Activated CD8-positive, alpha-beta T cell treated with anti-CD3 and anti-CD28 coated beads, Interleukin-2, amount 10 ng/mL, durations not matched to agents 7 days and 5 days (primary cell): ENCODE measurements at regions of chr1 and their contacts with region 1.

Region 1: DNA sequence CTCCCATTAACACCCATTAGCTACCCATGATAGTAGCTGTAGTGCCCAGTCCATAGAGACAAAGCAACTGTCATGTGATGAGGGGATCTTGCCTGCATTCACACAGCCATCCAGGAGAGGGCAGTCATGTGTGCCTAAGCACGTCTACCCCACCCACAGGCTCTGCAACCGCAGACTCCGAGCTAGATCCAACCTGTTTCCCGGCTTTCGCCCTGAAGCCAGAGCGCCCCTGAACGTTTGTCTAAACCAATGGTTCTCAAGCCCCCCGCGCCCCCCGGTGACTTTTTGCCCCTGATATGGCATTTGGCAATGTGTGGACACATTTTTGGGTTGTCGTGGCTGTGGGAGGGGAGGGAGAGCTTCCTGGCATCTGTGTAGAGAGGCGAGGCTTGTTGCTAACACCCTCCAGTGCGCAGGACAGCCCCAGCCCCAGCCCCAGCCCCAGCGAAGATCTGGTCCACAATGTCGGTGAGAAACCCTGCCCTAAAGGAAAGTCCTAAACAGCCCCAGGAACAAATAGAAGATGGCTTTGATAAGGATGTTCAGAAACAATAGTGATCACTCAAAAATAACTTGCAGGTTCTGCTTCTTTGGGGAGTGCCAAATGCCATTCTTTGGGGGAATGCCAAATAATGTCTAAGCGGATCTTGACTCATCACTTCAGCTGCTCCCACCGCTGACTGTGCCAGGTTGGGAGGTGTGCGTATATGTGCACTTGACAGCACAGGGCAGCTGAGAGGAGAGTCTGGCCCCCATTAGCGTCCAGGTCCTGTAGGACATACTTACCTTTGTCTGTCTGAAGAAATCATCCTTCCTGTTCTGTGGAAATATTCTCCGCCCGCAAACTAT is 34.5 kb downstream of the SLC44A3 start:
- DNase-seq: peak; percentile 87
- ATAC-seq: peak; percentile 97
- H3K4me3 Mint-ChIP-seq: no peak overlapping the region
- H3K27ac Mint-ChIP-seq: no peak overlapping the region
- H3K4me1 Mint-ChIP-seq: no peaks in the 10 kb centered on the region
- H3K27me3 Mint-ChIP-seq: peaks cover 7% of the 10 kb centered on the region

Region 2: GRCh38 chr1:94773931-94774422 is 80.7 kb before region 1 on chr1:
- CTCF ChIA-PET with region 1: no interaction called
- POLR2A ChIA-PET with region 1: no interaction called
- DNase-seq: no peak
- ATAC-seq: no peak
- H3K4me3 Mint-ChIP-seq: no peak overlapping the region
- H3K27ac Mint-ChIP-seq: no peak overlapping the region
- H3K4me1 Mint-ChIP-seq: no peaks in the 10 kb centered on the region
- H3K27me3 Mint-ChIP-seq: peaks cover 2% of the 10 kb centered on the region

Region 3: GRCh38 chr1:94787691-94788090 is 67.0 kb before region 1 on chr1:
- CTCF ChIA-PET with region 1: no interaction called
- POLR2A ChIA-PET with region 1: no interaction called
- DNase-seq: no peak
- ATAC-seq: no peak
- H3K4me3 Mint-ChIP-seq: no peak overlapping the region
- H3K27ac Mint-ChIP-seq: no peak overlapping the region
- H3K4me1 Mint-ChIP-seq: peaks cover 2% of the 10 kb centered on the region
- H3K27me3 Mint-ChIP-seq: peaks cover 14% of the 10 kb centered on the region

Region 4: GRCh38 chr1:94836891-94837290 is 17.8 kb before region 1 on chr1:
- CTCF ChIA-PET with region 1: interaction called, 14 read pairs
- POLR2A ChIA-PET with region 1: no interaction called
- DNase-seq: no peak
- ATAC-seq: no peak
- H3K4me3 Mint-ChIP-seq: no peak overlapping the region
- H3K27ac Mint-ChIP-seq: no peak overlapping the region
- H3K4me1 Mint-ChIP-seq: no peaks in the 10 kb centered on the region
- H3K27me3 Mint-ChIP-seq: peaks cover 19% of the 10 kb centered on the region

Region 5: DNA sequence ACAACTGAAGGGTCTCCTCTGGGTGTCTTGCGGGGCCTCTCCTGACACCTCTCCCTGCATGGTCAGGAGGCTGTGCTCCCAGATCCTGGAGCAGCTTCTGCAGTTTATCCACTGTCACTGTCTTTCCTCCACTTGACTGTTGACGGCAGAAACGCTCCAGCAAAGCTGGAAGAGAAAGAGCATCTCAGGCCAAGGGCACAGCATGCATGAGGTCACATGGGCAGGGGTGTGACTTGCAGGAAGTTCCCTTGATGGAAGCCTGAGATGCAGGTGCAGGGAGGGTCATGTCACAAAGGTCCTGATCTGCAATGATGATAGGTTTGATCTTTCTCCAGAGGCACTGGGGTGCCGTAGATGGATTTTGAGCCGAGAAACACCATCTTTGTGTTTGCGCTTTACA is 11.3 kb before region 1 on chr1:
- CTCF ChIA-PET with region 1: interaction called, 19 read pairs
- POLR2A ChIA-PET with region 1: no interaction called
- DNase-seq: no peak
- ATAC-seq: no peak
- H3K4me3 Mint-ChIP-seq: no peak overlapping the region
- H3K27ac Mint-ChIP-seq: no peak overlapping the region
- H3K4me1 Mint-ChIP-seq: no peaks in the 10 kb centered on the region
- H3K27me3 Mint-ChIP-seq: peaks cover 15% of the 10 kb centered on the region

Region 6: GRCh38 chr1:94873522-94874351 is 19.1 kb after region 1 on chr1:
- CTCF ChIA-PET with region 1: interaction called, 18 read pairs
- POLR2A ChIA-PET with region 1: no interaction called
- DNase-seq: no peak
- ATAC-seq: no peak
- H3K4me3 Mint-ChIP-seq: no peak overlapping the region
- H3K27ac Mint-ChIP-seq: no peak overlapping the region
- H3K4me1 Mint-ChIP-seq: peaks cover 11% of the 10 kb centered on the region
- H3K27me3 Mint-ChIP-seq: peaks cover 3% of the 10 kb centered on the region

Region 7: DNA sequence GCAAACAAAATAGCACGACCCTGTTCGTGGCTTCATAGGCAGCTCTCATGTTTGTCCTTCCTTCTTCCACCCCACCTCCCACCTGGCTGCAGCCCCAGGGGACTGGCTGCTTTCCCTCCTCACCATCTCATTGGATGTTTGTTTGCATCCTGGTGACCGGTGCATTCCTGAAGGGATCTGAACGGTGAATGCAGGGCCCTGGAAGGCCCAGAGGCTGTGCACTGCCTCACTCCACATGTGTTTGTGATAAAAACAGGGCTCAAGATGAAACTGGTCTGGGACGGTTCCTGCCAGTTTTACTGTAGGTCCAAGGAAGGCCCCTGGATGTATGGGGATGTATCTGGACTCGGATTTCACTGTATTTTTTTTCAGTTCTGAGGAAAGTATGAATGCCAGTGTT is 29.4 kb after region 1 on chr1:
- CTCF ChIA-PET with region 1: no interaction called
- POLR2A ChIA-PET with region 1: no interaction called
- DNase-seq: no peak
- ATAC-seq: no peak
- H3K4me3 Mint-ChIP-seq: no peak overlapping the region
- H3K27ac Mint-ChIP-seq: no peak overlapping the region
- H3K4me1 Mint-ChIP-seq: peaks cover 12% of the 10 kb centered on the region
- H3K27me3 Mint-ChIP-seq: no peaks in the 10 kb centered on the region

Region 8: GRCh38 chr1:95043141-95043980 is 188.7 kb after region 1 on chr1:
- CTCF ChIA-PET with region 1: interaction called, 288 read pairs
- POLR2A ChIA-PET with region 1: interaction called, 3 read pairs
- DNase-seq: peak; percentile 87
- ATAC-seq: peak; percentile 95
- H3K4me3 Mint-ChIP-seq: no peak overlapping the region
- H3K27ac Mint-ChIP-seq: no peak overlapping the region
- H3K4me1 Mint-ChIP-seq: no peaks in the 10 kb centered on the region
- H3K27me3 Mint-ChIP-seq: no peaks in the 10 kb centered on the region